Activated B cell treated with CpG ODN at 0.5 μM for 24 hours (primary cell): ENCODE measurements at regions of chr15 and their contacts with region 1.

Region 1: GRCh38 chr15:84716036-84716799 is at the start of gene SEC11A:
- DNase-seq: peak; percentile 96
- ATAC-seq: peak; percentile 95
- H3K4me3 Mint-ChIP-seq: peak within 1 kb of the TSS; percentile 93
- H3K27ac Mint-ChIP-seq: peak within 1 kb of the TSS; percentile 92
- H3K4me1 Mint-ChIP-seq: peaks cover 49% of the 10 kb centered on the region
- H3K27me3 Mint-ChIP-seq: no peaks in the 10 kb centered on the region
- CTCF ChIP-seq: no peak
- total RNA-seq, gene SEC11A: 68.9 and 71.2 TPM in 2 replicates

Region 2: DNA sequence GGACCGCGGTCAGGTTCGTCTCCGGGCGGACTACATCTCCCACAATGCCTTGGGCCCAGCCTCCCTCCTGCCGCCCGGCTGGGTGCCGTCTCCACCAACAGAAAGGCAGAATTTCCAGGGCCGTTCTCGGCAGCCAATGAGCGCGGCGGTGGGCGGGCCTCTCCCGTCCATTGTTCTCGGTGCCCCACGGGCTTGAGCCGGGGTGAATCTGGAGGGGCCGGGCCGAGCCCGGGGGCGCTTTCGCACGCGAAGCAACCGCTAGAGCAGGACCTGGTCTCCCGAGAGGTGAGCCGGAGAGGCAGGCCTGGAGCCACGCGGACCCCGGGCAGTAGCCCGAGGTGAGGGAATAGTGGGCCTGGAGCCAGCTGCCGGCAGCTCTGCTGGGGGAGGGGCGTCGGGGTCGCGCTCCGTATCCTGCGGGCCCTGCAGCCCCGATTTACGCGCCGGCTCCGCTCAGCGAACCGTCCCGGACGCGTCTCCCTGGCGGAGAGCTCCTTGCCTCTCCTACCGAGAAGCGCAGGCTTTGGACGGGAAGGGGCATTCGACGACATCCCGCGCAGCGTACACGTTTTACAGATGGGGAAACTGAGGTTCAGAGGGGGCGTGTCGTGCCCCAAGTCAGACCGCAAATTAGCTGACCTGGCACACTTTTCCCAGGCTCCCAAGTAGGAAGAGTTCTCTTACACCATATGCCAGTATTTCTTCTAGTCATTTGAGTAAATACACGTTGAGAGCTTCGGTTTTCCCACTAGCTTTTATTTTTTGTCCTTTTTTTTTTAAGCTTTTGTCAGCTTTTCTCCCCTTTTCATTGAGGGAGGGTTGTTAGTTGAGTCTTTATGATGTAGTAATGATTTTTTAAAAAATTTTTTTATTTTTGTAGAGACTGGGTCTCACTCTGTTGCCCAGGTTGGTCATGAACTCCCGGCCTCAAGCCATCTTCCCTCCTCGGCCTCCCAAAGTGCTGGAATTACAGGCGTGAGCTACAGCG is 115.1 kb before region 1 on chr15 and contains the start of gene ZSCAN2:
- CTCF ChIA-PET with region 1: no interaction called
- POLR2A ChIA-PET with region 1: interaction called, 6 read pairs
- intact Hi-C with region 1: loop called (anchors 1 kb)
- DNase-seq: peak; percentile 86
- ATAC-seq: peak; percentile 94
- H3K4me3 Mint-ChIP-seq: peak within 1 kb of the TSS; percentile 97
- H3K27ac Mint-ChIP-seq: peak within 1 kb of the TSS; percentile 88
- H3K4me1 Mint-ChIP-seq: peaks cover 73% of the 10 kb centered on the region
- H3K27me3 Mint-ChIP-seq: no peaks in the 10 kb centered on the region
- CTCF ChIP-seq: no peak
- total RNA-seq, gene ZSCAN2: 16.0 and 18.7 TPM in 2 replicates

Region 3: DNA sequence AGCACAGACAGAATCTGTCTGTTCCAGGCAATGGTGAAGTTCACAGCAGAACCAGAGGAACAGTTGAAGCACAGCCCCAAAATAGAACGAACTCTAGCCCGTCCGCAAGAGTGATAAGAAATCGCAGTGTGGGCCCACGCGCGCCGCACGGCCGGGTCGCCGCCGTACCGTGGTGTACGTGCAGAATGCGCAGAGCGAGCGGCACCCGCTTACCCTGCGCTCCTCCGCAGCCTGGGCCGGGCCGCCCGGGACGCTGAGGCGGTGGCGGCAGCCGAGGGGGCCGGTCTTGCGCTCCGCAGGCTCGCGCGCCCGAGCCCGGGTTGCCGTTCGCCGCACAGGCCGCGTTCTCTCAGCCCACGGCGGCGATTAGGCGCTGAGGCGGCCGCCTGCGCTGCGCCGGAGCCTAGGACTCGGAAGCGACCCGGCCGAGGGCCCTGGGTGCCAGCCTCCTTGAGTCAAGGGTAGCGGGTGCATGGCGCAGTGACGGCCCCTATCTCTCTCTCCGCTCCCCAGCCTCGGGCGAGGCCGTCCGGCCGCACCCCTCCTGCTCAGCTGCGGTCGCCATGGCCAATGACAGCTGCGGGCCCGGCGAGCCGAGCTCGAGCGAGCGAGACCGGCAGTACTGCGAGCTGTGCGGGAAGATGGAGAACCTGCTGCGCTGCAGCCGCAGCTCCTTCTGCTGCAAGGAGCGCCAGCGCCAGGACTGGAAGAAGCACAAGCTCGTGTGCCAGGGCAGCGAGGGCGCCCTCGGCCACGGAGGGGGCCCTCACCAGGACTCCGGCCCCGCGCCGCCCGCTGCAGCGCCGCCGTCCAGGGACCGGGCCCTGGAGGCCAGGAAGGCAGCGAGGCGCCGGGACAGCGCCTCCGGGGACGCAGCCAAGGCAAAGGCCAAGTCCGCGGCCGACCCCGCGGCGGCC is 82.6 kb before region 1 on chr15:
- CTCF ChIA-PET with region 1: no interaction called
- POLR2A ChIA-PET with region 1: interaction called, 17 read pairs
- intact Hi-C with region 1: loop called (anchors 1 kb)
- DNase-seq: peak; percentile 67
- ATAC-seq: peak; percentile 45
- H3K4me3 Mint-ChIP-seq: peak overlapping the region; percentile 91
- H3K27ac Mint-ChIP-seq: peak overlapping the region; percentile 87
- H3K4me1 Mint-ChIP-seq: peaks cover 50% of the 10 kb centered on the region
- H3K27me3 Mint-ChIP-seq: no peaks in the 10 kb centered on the region
- CTCF ChIP-seq: no peak

Region 4: DNA sequence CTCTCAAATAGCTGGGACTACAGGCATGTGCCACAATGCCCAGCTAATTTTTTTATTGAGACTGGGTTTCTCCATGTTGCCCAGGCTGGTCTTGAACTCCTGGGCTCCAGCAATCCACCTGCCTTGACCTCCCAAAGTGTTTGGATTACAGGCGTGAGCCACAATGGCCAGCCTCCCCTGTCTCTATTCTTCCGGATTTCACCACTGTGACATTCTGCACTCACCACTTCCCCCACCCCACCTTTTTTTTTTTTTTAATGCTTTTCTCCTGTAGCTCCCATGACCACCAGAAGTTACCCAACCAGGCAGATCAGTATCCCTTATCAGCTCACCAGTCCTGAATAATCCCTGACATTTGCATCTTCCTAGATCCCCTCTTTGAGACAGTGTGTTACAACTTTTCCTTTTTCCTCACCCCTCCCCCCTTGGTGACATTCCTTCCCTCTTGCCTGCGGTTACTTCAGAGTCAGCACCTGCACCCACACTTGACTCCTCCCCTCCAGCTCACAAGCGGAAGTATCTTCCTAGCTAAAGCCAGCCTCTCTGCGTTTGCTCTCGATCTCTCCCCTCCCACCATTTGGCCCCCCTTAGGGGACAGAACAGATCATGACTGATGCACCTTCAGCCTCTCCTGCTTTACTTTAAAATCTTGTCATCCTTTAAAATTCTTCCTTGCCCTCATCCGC is 18.7 kb after region 1 on chr15:
- CTCF ChIA-PET with region 1: interaction called, 17 read pairs
- POLR2A ChIA-PET with region 1: interaction called, 139 read pairs
- intact Hi-C with region 1: loop called (anchors 1 kb)
- DNase-seq: peak; percentile 41
- ATAC-seq: peak; percentile 90
- H3K4me3 Mint-ChIP-seq: peak overlapping the region; percentile 73
- H3K27ac Mint-ChIP-seq: peak overlapping the region; percentile 91
- H3K4me1 Mint-ChIP-seq: peaks cover 46% of the 10 kb centered on the region
- H3K27me3 Mint-ChIP-seq: no peaks in the 10 kb centered on the region
- CTCF ChIP-seq: no peak

Region 5: GRCh38 chr15:84741121-84741520 is 24.9 kb after region 1 on chr15:
- CTCF ChIA-PET with region 1: no interaction called
- POLR2A ChIA-PET with region 1: interaction called, 139 read pairs
- intact Hi-C with region 1: no loop called
- DNase-seq: no peak
- ATAC-seq: no peak
- H3K4me3 Mint-ChIP-seq: no peak overlapping the region
- H3K27ac Mint-ChIP-seq: no peak overlapping the region
- H3K4me1 Mint-ChIP-seq: peaks cover 30% of the 10 kb centered on the region
- H3K27me3 Mint-ChIP-seq: no peaks in the 10 kb centered on the region
- CTCF ChIP-seq: no peak

Region 6: DNA sequence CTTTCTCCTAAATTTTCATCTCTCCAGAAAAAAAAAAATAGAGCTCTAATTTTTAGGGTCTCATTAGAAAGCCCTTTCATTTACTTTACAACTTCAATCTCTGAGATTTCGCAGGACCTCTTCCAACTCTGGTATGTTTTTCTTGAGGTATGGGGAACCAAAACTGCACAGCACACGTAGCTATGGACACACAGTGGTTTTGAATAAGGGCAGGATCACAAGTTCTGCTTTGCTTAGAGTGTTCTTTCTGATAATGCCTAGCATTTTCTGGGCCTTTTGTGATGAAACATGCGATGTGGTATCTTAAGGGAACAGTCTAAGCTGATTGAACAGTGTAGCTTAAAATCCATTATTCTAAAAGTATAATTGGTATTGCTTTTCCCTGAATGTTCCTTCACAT is 57.5 kb after region 1 on chr15:
- CTCF ChIA-PET with region 1: no interaction called
- POLR2A ChIA-PET with region 1: interaction called, 14 read pairs
- intact Hi-C with region 1: no loop called
- DNase-seq: no peak
- ATAC-seq: peak; percentile 78
- H3K4me3 Mint-ChIP-seq: peak overlapping the region; percentile 2
- H3K27ac Mint-ChIP-seq: peak overlapping the region; percentile 35
- H3K4me1 Mint-ChIP-seq: peaks cover 40% of the 10 kb centered on the region
- H3K27me3 Mint-ChIP-seq: no peaks in the 10 kb centered on the region
- CTCF ChIP-seq: no peak

Region 7: GRCh38 chr15:85030301-85031049 is 314.3 kb after region 1 on chr15:
- CTCF ChIA-PET with region 1: no interaction called
- POLR2A ChIA-PET with region 1: no interaction called
- intact Hi-C with region 1: no loop called
- DNase-seq: no peak
- ATAC-seq: no peak
- H3K4me3 Mint-ChIP-seq: no peak overlapping the region
- H3K27ac Mint-ChIP-seq: no peak overlapping the region
- H3K4me1 Mint-ChIP-seq: peaks cover 26% of the 10 kb centered on the region
- H3K27me3 Mint-ChIP-seq: no peaks in the 10 kb centered on the region
- CTCF ChIP-seq: no peak